OCI-LY7 (cell line): ENCODE measurements at regions of chr1 and their contacts with region 1.

Region 1: DNA sequence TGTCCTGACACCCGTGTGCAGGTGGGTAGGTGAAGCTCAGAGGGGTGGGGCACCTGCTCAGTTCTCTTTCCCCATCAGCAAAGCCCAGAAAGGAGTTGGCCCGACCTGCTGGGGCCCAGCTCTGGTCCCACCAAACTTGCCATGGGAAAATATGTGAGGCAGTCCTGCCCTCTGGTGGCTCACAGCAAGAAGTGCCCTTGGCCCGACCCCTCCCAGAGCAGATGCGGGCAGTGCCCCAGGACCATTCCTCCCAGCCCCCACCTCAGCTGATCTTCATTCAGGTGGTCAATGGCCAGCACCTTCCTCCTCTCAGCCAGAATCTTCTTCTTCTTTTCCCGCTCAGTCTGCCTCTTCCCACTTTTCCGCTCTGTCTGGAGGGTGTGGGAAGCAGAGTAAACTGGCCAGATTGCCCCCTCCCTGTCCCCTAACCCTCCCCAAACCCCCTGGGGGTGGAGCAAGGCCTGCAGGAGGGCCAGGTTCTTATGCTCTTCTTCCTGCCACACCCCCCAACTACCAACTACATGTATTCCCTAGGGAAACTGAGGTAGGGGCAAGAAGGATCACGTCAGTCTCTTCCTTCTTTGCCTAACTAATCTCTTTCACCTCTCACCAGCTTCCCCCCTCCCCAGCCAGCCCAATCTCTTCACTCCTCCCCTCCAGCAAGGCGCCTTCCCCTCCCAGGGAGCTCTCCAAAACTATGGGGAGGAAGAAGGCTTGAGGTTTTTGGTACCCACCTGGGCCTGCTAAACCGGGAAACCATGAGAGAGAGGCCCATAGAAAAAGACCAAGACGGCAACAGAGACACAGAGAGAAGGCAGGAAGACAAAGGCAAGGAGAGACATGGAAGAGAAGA is 15.6 kb downstream of the TNNT2 start:
- DNase-seq: peak; percentile 54
- H3K4me3 ChIP-seq: no peak overlapping the region
- H3K27ac ChIP-seq: no peak overlapping the region
- H3K4me1 ChIP-seq: no peaks in the 10 kb centered on the region
- CTCF ChIP-seq: peak; percentile 85

Region 2: GRCh38 chr1:201244026-201244425 is 117.9 kb before region 1 on chr1:
- CTCF ChIA-PET with region 1: no interaction called
- POLR2A ChIA-PET with region 1: no interaction called
- intact Hi-C with region 1: loop called (anchors 5 kb)
- DNase-seq: no peak
- H3K4me3 ChIP-seq: no peak overlapping the region
- H3K27ac ChIP-seq: no peak overlapping the region
- H3K4me1 ChIP-seq: no peaks in the 10 kb centered on the region
- CTCF ChIP-seq: no peak

Region 3: GRCh38 chr1:201254625-201255506 is 107.0 kb before region 1 on chr1:
- CTCF ChIA-PET with region 1: no interaction called
- POLR2A ChIA-PET with region 1: no interaction called
- intact Hi-C with region 1: loop called (anchors 1 kb)
- DNase-seq: peak; percentile 50
- H3K4me3 ChIP-seq: no peak overlapping the region
- H3K27ac ChIP-seq: no peak overlapping the region
- H3K4me1 ChIP-seq: no peaks in the 10 kb centered on the region
- CTCF ChIP-seq: peak; percentile 88

Region 4: DNA sequence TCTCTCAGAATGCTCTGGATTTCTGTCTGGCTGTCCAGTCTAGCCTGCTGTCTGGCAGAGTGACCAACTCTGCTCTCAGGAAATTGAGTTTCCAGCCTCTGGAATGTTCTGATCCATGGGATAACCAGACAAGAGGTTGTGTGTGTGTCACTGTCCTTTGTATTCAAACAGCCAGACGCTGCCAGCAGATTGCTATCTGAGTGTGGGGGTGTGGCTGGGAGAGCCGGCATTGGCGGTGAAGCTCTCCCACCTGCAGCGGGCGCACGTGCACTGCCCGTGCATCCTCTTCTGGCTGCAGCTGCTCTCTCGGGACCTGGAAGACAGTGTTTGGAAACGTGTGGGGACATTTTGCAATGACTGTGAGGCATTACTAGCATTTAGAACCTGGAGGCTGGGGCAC is 52.5 kb before region 1 on chr1:
- CTCF ChIA-PET with region 1: no interaction called
- POLR2A ChIA-PET with region 1: no interaction called
- intact Hi-C with region 1: loop called (anchors 5 kb)
- DNase-seq: peak; percentile 49
- H3K4me3 ChIP-seq: no peak overlapping the region
- H3K27ac ChIP-seq: no peak overlapping the region
- H3K4me1 ChIP-seq: no peaks in the 10 kb centered on the region
- CTCF ChIP-seq: peak; percentile 76